OCI-LY7 (cell line): ENCODE measurements at regions of chr12 and their contacts with region 1.

Region 1: GRCh38 chr12:100234598-100235304 is 32.1 kb downstream of the DEPDC4 start:
- DNase-seq: peak; percentile 53
- H3K4me3 ChIP-seq: no peak overlapping the region
- H3K27ac ChIP-seq: no peak overlapping the region
- H3K4me1 ChIP-seq: no peaks in the 10 kb centered on the region
- CTCF ChIP-seq: peak; percentile 89

Region 2: DNA sequence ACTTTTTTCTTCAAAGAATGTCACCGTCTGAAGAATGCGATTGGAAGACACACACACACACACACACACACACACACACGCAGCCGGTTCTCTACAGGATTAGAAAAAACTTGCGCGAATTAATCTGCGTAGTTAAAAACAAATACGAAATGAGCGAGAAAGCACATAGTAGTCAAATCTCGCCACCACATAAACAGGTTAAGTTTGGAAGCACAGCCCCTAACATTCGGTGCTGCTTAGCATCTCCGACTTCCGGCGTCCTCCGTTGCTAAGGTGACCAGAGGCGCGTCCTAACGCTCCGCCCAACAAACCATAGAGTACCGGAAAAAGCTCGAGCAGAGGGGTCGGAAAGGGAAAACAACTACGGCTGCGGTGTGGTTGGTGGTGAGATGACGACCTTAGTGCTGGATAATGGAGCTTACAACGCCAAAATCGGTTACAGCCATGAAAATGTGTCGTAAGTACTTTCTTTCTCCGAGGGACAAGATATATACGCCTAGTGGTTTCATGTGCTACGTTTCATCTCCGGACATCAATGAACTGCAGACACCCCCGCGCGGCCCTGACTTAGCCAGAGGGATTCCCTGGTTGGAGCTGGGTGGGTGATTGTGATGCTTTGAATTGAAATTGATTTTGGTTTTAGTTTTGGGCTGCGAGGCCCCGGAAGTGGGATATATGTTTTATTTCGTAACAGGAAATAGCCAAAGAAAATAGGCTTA is 34.1 kb before region 1 on chr12 and contains the start of gene ACTR6:
- CTCF ChIA-PET with region 1: no interaction called
- POLR2A ChIA-PET with region 1: no interaction called
- intact Hi-C with region 1: no loop called
- DNase-seq: peak; percentile 97
- H3K4me3 ChIP-seq: peak within 1 kb of the TSS; percentile 89
- H3K27ac ChIP-seq: peak within 1 kb of the TSS; percentile 69
- H3K4me1 ChIP-seq: peaks cover 30% of the 10 kb centered on the region
- CTCF ChIP-seq: no peak
- total RNA-seq, gene ACTR6: 14.6 and 22.2 TPM in 2 replicates

Region 3: DNA sequence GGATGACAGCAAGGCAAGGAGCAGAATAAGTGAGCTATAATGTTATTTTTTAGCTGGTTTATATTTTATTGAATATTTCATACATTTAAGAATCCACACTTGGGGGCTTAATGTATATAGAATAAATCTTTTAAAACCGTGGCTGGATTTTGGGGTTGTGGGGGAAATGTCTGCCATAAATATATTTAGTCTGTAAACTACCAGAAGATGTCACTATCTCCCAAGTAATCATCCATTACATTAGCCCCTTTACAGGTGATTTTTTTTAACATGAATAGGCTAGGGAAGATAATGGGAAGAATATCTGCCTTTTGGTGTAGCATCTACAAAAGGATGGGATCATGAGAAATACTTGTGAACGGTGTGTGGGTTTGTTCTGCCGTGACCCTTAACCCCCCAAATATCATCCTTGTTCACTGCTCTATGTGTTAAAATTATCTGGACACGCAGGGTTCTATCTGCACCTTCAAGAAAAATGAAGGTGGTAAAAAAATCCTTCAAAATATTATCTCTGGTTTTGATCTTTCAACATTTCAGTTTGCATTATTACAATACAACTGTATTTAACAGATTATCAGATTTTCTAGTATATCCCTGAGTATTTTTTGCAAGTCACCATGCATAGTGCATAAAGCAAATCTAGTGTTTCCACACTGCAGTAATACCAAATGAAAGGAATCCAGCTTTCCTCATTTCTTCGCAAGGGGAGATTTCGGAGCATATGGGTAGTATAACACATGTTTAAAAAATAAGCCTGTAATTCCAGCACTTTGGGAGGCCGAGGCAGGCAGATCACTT is 114.1 kb after region 1 on chr12:
- CTCF ChIA-PET with region 1: no interaction called
- POLR2A ChIA-PET with region 1: no interaction called
- intact Hi-C with region 1: loop called (anchors 5 kb)
- DNase-seq: peak; percentile 33
- H3K4me3 ChIP-seq: no peak overlapping the region
- H3K27ac ChIP-seq: no peak overlapping the region
- H3K4me1 ChIP-seq: no peaks in the 10 kb centered on the region
- CTCF ChIP-seq: peak; percentile 70

Region 4: DNA sequence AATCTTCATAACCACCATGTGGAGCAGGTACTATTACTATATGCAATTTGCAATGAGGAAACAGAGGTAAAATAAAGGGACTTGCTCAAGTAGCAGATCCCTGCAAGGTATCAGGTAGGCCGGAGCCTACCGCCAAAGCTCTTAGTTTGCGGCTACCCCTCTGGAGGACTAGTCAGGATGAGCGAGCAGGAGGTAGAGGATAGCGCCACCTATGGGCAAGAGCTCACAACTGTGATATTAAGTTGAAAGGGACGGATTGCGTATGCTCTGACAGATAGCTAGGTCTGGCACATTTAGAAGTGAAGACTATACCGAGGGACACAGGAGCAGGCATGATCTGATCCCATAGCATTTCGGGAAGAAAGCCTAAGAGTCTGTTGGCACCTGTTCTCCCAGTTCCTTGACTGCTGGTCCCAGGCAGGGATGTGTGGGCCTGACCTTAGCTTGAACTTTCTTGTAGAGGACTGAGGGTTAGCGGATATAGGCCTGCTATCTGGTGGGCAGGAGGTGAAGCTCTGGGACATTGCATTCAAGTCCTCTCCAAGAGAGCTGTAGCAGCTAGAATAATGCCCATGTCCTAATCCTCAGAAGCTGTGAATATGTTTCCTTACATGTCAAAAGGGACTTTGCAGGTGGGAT is 170.1 kb after region 1 on chr12:
- CTCF ChIA-PET with region 1: interaction called, 7 read pairs
- POLR2A ChIA-PET with region 1: interaction called, 4 read pairs
- intact Hi-C with region 1: loop called (anchors 1 kb)
- DNase-seq: peak; percentile 69
- H3K4me3 ChIP-seq: no peak overlapping the region
- H3K27ac ChIP-seq: no peak overlapping the region
- H3K4me1 ChIP-seq: no peaks in the 10 kb centered on the region
- CTCF ChIP-seq: peak; percentile 84

Region 5: DNA sequence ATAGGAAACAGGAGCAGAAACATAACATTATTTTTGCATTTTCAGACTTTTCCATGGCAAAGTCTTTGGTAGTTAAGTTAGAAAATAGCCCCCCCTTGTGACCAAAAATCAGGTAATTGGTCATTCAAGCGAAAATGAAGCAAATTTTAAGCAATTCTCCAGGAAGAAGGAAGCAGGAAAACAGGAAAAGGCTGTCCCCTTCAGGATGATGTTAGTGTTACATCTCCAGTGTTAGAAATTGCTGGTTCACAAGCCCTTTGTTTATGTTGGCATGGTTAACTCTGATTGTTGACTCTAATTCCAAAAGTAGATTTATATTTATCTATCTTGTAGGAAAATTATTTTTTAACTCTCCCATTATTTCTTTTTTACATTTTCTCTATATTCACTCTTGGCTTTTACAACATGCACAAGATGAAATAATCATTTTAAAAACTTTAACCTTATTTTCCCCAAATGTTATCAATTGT is 319.9 kb after region 1 on chr12:
- CTCF ChIA-PET with region 1: no interaction called
- POLR2A ChIA-PET with region 1: no interaction called
- intact Hi-C with region 1: loop called (anchors 2 kb)
- DNase-seq: peak; percentile 59
- H3K4me3 ChIP-seq: no peak overlapping the region
- H3K27ac ChIP-seq: no peak overlapping the region
- H3K4me1 ChIP-seq: no peaks in the 10 kb centered on the region
- CTCF ChIP-seq: peak; percentile 81

Region 6: GRCh38 chr12:100668945-100669536 is 434.3 kb after region 1 on chr12:
- CTCF ChIA-PET with region 1: no interaction called
- POLR2A ChIA-PET with region 1: no interaction called
- intact Hi-C with region 1: loop called (anchors 5 kb)
- DNase-seq: peak; percentile 55
- H3K4me3 ChIP-seq: no peak overlapping the region
- H3K27ac ChIP-seq: no peak overlapping the region
- H3K4me1 ChIP-seq: no peaks in the 10 kb centered on the region
- CTCF ChIP-seq: peak; percentile 95

Region 7: DNA sequence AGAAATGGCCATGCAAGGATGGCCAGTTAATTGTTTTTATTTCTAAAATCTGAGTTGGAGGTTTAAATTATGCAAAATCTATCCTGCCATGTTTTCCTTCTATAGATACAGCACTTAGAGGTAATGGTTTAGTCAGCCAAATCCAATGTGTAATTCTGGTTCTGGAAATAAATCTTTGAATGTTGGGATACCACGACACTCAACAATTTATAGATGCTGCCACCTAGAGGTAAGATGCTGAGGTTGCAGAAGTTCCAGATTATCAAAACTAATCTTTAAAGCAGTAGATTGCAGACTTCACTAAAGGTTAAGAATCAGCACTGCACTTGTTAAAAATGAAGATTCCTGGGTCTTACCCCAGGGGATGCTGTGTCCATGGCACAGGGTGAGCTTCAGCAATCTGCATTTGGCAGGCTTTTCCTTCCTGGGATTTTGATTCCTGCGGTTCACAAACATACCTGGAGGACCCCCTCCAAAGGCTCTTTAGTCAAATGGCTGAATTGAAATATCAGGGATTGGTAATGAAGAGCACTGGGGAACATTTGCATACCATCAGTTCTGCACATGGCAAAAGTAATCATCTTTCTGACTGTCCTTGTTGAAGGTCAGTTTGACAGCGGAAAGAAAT is 506.4 kb after region 1 on chr12:
- CTCF ChIA-PET with region 1: no interaction called
- POLR2A ChIA-PET with region 1: no interaction called
- intact Hi-C with region 1: loop called (anchors 5 kb)
- DNase-seq: peak; percentile 44
- H3K4me3 ChIP-seq: no peak overlapping the region
- H3K27ac ChIP-seq: no peak overlapping the region
- H3K4me1 ChIP-seq: no peaks in the 10 kb centered on the region
- CTCF ChIP-seq: peak; percentile 92